GM10248 (cell line): ENCODE measurements at regions of chr4 and their contacts with region 1.

Region 1: GRCh38 chr4:52545099-52546069 is 113.7 kb downstream of the USP46 start:
- DNase-seq: peak; percentile 75
- CTCF ChIP-seq: peak; percentile 92

Region 2: DNA sequence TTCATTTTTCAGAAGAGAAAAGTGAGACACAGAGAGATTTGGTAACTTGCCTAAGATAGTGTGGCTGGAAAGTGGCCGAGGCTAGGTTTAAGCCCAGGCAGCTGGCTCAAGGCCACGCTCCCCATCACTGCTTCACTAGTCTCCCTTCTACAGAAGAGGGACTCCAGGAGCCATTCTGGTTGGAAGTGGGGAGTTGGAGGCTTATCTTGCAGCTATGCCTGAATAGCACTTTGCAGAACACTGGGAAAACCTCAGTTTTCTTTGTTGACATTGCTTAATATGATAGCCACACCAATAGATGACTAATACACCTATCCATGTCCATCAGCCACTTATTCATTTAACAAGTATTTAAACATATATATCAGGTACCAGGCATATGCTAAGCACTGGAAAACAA is 543.8 kb before region 1 on chr4:
- CTCF ChIA-PET with region 1: no interaction called
- POLR2A ChIA-PET with region 1: no interaction called
- DNase-seq: no peak
- CTCF ChIP-seq: no peak

Region 3: GRCh38 chr4:52051619-52052474 is 493.5 kb before region 1 on chr4:
- CTCF ChIA-PET with region 1: no interaction called
- POLR2A ChIA-PET with region 1: no interaction called
- DNase-seq: peak; percentile 54
- CTCF ChIP-seq: no peak

Region 4: DNA sequence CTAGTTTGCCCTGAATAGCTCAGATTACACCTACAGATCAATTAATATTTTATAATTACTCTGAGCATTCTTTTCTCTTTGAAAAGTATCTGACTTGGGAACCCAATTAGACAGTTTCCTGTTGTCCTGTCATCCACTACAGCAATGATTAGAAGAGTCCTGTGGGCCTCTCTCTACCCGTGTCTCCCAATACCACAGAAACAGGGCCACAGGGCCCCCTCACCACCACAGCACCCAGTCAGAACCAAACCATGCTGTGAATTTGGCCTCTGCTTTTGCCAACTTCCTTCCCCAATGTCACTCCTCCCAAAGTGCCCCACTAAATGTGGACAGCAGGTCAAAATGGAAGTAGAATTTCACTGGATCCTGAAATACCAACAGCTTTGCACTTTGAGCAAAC is 103.5 kb after region 1 on chr4:
- CTCF ChIA-PET with region 1: interaction called, 15 read pairs
- POLR2A ChIA-PET with region 1: no interaction called
- DNase-seq: no peak
- CTCF ChIP-seq: no peak

Region 5: GRCh38 chr4:52665592-52665991 is 120.2 kb after region 1 on chr4:
- CTCF ChIA-PET with region 1: interaction called, 35 read pairs
- POLR2A ChIA-PET with region 1: no interaction called
- DNase-seq: peak; percentile 51
- CTCF ChIP-seq: peak; percentile 50

Region 6: DNA sequence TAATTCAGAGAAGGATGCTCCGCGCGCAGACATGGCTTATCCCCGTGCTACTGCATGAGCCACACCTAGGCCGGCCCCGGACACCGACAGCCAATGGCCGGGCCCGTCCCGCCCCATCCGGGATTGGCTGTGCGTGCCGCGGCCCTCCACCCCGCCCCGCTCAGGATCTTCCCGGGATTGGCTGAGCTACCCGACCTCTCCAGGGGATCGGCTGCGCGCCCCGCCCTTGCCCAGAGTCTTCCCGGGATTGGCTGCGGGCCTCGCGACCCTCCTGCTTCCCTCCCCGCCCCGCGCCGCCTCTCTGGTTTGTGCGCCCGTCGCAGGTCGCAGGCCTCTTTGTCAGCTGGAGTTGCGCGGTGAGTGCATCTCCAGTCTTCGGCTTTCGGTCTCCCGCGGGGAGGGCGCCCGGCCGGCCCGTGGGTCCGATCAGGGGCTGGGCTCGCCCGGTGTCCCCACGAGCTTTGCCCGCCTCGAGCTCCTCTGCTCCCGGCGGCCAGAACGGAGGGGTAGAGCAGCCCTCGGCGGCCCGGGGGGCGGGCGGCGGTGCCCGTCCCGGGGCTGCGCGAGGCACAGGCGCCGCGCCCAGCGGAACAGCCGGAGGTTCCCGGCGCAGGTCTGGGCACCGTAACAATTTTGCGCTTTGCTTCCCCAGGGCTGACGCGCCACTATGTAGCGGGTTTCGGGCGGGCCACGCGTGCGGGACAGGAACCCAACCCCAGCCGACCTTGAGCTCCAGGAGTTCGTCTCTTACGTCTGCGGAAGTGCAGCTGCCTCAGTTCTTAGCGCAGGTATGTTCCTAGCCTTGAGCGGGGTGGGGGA is 167.0 kb after region 1 on chr4:
- CTCF ChIA-PET with region 1: interaction called, 14 read pairs
- POLR2A ChIA-PET with region 1: no interaction called
- DNase-seq: peak; percentile 96
- CTCF ChIP-seq: no peak

Region 7: DNA sequence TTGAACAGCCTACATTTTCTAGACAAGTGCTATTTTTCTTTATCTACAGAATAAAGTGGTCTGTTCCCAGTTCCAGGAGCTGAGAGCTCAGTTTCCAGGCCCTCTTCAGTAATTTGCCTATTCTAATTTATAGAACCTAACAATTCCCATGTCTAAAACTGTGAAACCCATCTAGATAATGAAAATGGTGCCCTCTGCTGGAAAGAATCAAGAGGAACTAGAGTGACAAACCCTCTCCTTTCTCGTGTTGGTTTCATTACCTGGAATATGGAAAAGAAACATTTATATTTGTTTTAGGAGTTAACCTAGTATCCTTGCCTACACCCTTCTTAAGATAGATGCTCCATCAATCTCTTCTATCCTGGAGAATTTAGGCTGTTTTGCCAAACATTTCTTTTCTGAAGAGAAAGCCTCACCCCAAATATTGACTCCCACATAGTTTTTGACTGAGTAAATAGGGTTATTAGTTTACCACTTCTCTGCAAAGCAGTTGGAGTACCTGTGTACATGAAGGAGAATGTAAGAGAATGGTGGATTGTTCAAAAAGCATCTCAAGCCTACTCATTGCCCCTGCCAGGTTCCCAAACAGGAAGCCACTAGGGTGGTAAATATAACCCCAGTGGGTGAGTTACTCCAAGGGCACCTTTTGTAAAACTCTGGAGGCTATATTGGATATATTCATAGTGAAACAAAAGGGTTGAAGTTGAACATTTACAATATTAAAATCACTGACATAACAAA is 438.3 kb after region 1 on chr4:
- CTCF ChIA-PET with region 1: interaction called, 76 read pairs
- POLR2A ChIA-PET with region 1: no interaction called
- DNase-seq: peak; percentile 38
- CTCF ChIP-seq: peak; percentile 48